Esophagus muscularis mucosa (tissue), 4 donors: ENCODE measurements at regions of chr5 and their contacts with region 1.

Region 1: GRCh38 chr5:68252673-68253623 is 37.4 kb downstream of the PIK3R1 start:
- DNase-seq: no peak
- H3K4me3 ChIP-seq: peak overlapping the region; percentile 33 to 45 (median 42)
- H3K27ac ChIP-seq: peak overlapping the region; percentile 74 to 82 (median 78)
- H3K4me1 ChIP-seq: peaks cover 87 to 100% (median 100%) of the 10 kb centered on the region in 4 donors
- H3K27me3 ChIP-seq: no peaks in the 10 kb centered on the region
- CTCF ChIP-seq: peak; percentile 68 to 77 (median 74)
- EP300 ChIP-seq: no peak
- POLR2A ChIP-seq: no peak

Region 2: DNA sequence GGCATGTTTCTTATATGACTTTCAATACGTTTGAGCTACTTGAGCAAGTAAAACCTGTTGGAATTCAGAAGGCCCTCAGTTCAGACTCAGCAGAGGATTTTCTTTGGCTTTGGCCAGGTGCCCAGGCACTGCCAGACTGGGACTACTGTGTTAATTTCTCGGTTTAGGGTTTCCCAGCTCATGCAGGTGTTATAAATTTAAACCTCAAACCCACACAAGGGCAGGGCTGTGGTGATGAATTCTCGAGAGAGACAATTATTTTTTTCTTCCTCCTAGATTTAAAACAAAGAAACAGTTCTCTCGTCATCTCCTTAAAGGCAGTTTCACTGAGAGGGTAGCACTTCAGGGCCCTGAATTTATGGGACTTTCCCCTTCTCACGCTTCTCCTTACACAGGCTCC is 443.4 kb before region 1 on chr5:
- intact Hi-C with region 1: loop called (anchors 10 kb)
- DNase-seq: no peak
- H3K4me3 ChIP-seq: no peak overlapping the region
- H3K27ac ChIP-seq: no peak overlapping the region
- H3K4me1 ChIP-seq: peaks cover 7 to 15% (median 13%) of the 10 kb centered on the region in 4 donors
- H3K27me3 ChIP-seq: no peaks in the 10 kb centered on the region
- CTCF ChIP-seq: no peak
- EP300 ChIP-seq: no peak
- POLR2A ChIP-seq: no peak